ENCODE measurements at regions of chr12 and their contacts with region 1.

Region 1: DNA sequence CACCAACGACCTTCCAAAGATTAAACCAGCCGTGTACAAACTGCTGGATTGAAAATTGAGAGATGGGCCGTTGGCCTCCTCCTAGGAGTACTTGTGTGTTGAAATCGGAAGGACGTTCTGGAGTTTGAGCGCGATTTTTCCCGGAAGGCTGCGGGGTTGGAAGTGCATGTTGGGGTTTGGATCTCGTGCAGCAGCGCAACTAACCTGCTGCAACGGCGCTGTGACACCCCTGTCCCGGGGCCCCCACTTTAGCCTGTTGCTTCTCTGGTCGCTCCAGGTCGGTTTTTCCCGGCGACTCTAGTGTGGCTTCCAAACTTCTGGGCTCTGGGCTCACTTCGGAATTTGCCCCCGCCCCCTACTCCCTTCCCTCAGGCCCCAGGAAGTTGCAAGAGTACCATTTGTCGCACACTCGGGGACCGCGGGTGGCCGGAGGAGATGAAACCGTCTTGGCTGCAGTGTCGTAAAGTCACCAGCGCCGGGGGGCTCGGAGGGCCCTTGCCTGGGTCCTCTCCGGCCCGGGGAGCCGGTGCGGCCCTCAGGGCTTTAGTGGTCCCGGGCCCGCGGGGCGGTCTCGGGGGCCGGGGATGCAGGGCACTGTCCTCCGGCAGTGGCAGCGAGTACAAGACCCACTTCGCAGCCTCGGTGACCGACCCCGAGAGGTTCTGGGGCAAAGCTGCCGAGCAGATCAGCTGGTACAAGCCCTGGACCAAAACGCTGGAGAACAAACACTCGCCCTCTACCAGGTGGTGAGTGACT is at the start of gene ACSS3:
- DNase-seq: peak; percentile 67
- ATAC-seq: peak; percentile 83
- H3K4me3 ChIP-seq: peak within 1 kb of the TSS; percentile 65 to 94 (median 85)
- H3K27ac ChIP-seq: peak within 1 kb of the TSS; percentile 81
- H3K4me1 ChIP-seq: peaks cover 61% of the 10 kb centered on the region
- H3K27me3 ChIP-seq: no peaks in the 10 kb centered on the region; a peak in 1 of 5 replicates
- CTCF ChIP-seq: no peak
- EP300 ChIP-seq: 0 out of 4 replicates have a peak, but pooled peaks of 1 of the 2 experiments have one; percentile 33
- POLR2A ChIP-seq: peak; percentile 30 to 76; a peak in 3 of 4 replicates
- RAD21 ChIP-seq: no peak
- total RNA-seq, gene ACSS3: 86.3 and 95.7 TPM in 2 replicates

Region 2: GRCh38 chr12:80837348-80837985 is 240.4 kb before region 1 on chr12:
- CTCF ChIA-PET with region 1: no interaction called
- POLR2A ChIA-PET with region 1: no interaction called
- in situ Hi-C with region 1: no loop called
- intact Hi-C with region 1: loop called (anchors 2 kb)
- DNase-seq: peak; percentile 61
- ATAC-seq: peak; percentile 95
- H3K4me3 ChIP-seq: no peak overlapping the region
- H3K27ac ChIP-seq: no peak overlapping the region
- H3K4me1 ChIP-seq: peaks cover 19% of the 10 kb centered on the region
- H3K27me3 ChIP-seq: no peaks in the 10 kb centered on the region
- CTCF ChIP-seq: peak; percentile 75
- EP300 ChIP-seq: no peak
- POLR2A ChIP-seq: no peak
- RAD21 ChIP-seq: peak; percentile 65

Region 3: GRCh38 chr12:80912901-80913694 is 164.8 kb before region 1 on chr12:
- CTCF ChIA-PET with region 1: no interaction called
- POLR2A ChIA-PET with region 1: no interaction called
- in situ Hi-C with region 1: no loop called
- intact Hi-C with region 1: no loop called
- DNase-seq: no peak
- ATAC-seq: no peak
- H3K4me3 ChIP-seq: no peak overlapping the region
- H3K27ac ChIP-seq: no peak overlapping the region
- H3K4me1 ChIP-seq: peaks cover 23% of the 10 kb centered on the region
- H3K27me3 ChIP-seq: no peaks in the 10 kb centered on the region
- CTCF ChIP-seq: no peak
- EP300 ChIP-seq: no peak
- POLR2A ChIP-seq: no peak
- RAD21 ChIP-seq: no peak

Region 4: GRCh38 chr12:80936498-80937390 is 141.1 kb before region 1 on chr12:
- CTCF ChIA-PET with region 1: no interaction called
- POLR2A ChIA-PET with region 1: interaction called, 19 read pairs
- in situ Hi-C with region 1: loop called (anchors 10 kb)
- intact Hi-C with region 1: loop called (anchors 2 kb)
- DNase-seq: peak; percentile 79
- ATAC-seq: peak; percentile 90
- H3K4me3 ChIP-seq: peak overlapping the region; percentile 80 to 95 (median 83)
- H3K27ac ChIP-seq: peak overlapping the region; percentile 98
- H3K4me1 ChIP-seq: peaks cover 74% of the 10 kb centered on the region
- H3K27me3 ChIP-seq: no peaks in the 10 kb centered on the region; a peak in 2 of 5 replicates
- CTCF ChIP-seq: peak; percentile 26; the same call in 1 of the 2 replicates
- EP300 ChIP-seq: no peak
- POLR2A ChIP-seq: peak; percentile 81 to 89
- RAD21 ChIP-seq: peak; percentile 56

Region 5: GRCh38 chr12:80988986-80989385 is 88.9 kb before region 1 on chr12:
- CTCF ChIA-PET with region 1: no interaction called
- POLR2A ChIA-PET with region 1: no interaction called
- in situ Hi-C with region 1: no loop called
- intact Hi-C with region 1: no loop called
- DNase-seq: no peak
- ATAC-seq: no peak
- H3K4me3 ChIP-seq: no peak overlapping the region
- H3K27ac ChIP-seq: no peak overlapping the region
- H3K4me1 ChIP-seq: no peaks in the 10 kb centered on the region
- H3K27me3 ChIP-seq: no peaks in the 10 kb centered on the region; a peak in 1 of 5 replicates
- CTCF ChIP-seq: no peak
- EP300 ChIP-seq: no peak
- POLR2A ChIP-seq: no peak
- RAD21 ChIP-seq: no peak

Region 6: GRCh38 chr12:81015510-81015909 is 62.4 kb before region 1 on chr12:
- CTCF ChIA-PET with region 1: no interaction called
- POLR2A ChIA-PET with region 1: no interaction called
- in situ Hi-C with region 1: no loop called
- intact Hi-C with region 1: loop called (anchors 5 kb)
- DNase-seq: peak; percentile 6
- ATAC-seq: peak; percentile 62; the same call in 2 of the 3 replicates
- H3K4me3 ChIP-seq: no peak overlapping the region
- H3K27ac ChIP-seq: no peak overlapping the region
- H3K4me1 ChIP-seq: no peaks in the 10 kb centered on the region
- H3K27me3 ChIP-seq: no peaks in the 10 kb centered on the region
- CTCF ChIP-seq: no peak
- EP300 ChIP-seq: no peak
- POLR2A ChIP-seq: no peak
- RAD21 ChIP-seq: no peak

Region 7: DNA sequence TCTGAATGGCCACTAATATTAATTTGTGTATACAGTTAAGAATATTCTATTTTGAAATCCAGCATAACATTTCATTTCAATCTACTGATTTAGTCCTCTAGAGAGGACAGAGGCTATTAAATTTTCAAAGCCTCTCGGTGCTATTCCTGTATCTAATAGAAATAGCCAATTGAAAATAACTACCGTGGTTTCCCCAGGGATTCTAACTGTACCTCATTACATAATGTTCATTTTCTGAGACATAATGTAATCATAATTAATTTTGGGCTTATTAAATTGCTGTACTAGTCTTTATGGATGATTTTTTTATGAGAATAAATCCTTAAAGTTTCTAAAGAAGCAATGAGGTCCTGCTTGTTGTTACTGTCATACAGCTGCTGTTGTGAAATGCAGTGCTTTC is 38.6 kb before region 1 on chr12:
- CTCF ChIA-PET with region 1: no interaction called
- POLR2A ChIA-PET with region 1: no interaction called
- in situ Hi-C with region 1: no loop called
- intact Hi-C with region 1: loop called (anchors 5 kb)
- DNase-seq: no peak
- ATAC-seq: no peak
- H3K4me3 ChIP-seq: no peak overlapping the region
- H3K27ac ChIP-seq: no peak overlapping the region
- H3K4me1 ChIP-seq: peaks cover 21% of the 10 kb centered on the region
- H3K27me3 ChIP-seq: no peaks in the 10 kb centered on the region
- CTCF ChIP-seq: no peak
- EP300 ChIP-seq: no peak
- POLR2A ChIP-seq: no peak
- RAD21 ChIP-seq: no peak

Region 8: DNA sequence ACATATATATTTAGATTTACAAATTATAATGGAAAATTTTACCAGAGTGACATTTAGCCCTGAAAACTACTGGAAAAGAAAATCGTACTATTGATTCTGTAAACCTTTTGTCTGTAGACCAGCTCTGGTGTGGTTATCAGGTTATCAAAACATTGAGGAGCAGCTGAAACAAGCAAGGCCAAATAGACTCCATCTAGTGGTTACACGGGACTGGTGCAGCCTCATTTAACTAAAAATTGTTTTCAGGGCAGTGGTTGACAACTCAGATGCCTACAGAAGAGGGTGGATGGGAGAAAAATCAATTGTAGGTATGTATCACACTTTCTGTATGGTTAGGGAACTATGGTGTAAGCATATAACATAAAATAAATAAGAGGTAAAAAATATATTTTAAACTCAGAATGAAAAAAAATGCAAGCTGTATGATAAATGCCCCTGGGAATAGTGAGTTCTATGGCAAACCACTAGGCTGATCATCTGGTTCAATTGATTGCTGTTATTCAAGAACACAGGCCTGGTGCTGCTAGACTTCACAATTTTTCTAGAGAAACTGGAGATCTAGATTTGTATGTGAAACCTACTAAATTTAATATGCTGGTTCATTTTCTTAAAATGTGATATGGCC is 51.2 kb after region 1 on chr12:
- CTCF ChIA-PET with region 1: no interaction called
- POLR2A ChIA-PET with region 1: no interaction called
- in situ Hi-C with region 1: no loop called
- intact Hi-C with region 1: loop called (anchors 1 kb)
- DNase-seq: peak; percentile 72
- ATAC-seq: peak; percentile 90
- H3K4me3 ChIP-seq: no peak overlapping the region
- H3K27ac ChIP-seq: peak overlapping the region; percentile 31
- H3K4me1 ChIP-seq: peaks cover 22% of the 10 kb centered on the region
- H3K27me3 ChIP-seq: no peaks in the 10 kb centered on the region
- CTCF ChIP-seq: peak; percentile 73
- EP300 ChIP-seq: no peak
- POLR2A ChIP-seq: no peak
- RAD21 ChIP-seq: peak; percentile 39; the same call in 1 of the 2 replicates

Region 9: GRCh38 chr12:81147292-81147919 is 69.5 kb after region 1 on chr12:
- CTCF ChIA-PET with region 1: no interaction called
- POLR2A ChIA-PET with region 1: interaction called, 17 read pairs
- in situ Hi-C with region 1: loop called (anchors 5 kb)
- intact Hi-C with region 1: loop called (anchors 5 kb)
- DNase-seq: peak; percentile 25
- ATAC-seq: peak; percentile 74
- H3K4me3 ChIP-seq: no peak overlapping the region
- H3K27ac ChIP-seq: peak overlapping the region; percentile 89
- H3K4me1 ChIP-seq: peaks cover 61% of the 10 kb centered on the region
- H3K27me3 ChIP-seq: no peaks in the 10 kb centered on the region
- CTCF ChIP-seq: peak; percentile 69
- EP300 ChIP-seq: no peak
- POLR2A ChIP-seq: no peak
- RAD21 ChIP-seq: no peak